Posterior cingulate gyrus (tissue), 11 donors: ENCODE measurements at regions of chr15 and their contacts with region 1.

Region 1: GRCh38 chr15:68924866-68925560 is 5.3 kb upstream of the SPESP1 start:
- DNase-seq: peak; percentile 66 to 97 (median 85)

Region 2: DNA sequence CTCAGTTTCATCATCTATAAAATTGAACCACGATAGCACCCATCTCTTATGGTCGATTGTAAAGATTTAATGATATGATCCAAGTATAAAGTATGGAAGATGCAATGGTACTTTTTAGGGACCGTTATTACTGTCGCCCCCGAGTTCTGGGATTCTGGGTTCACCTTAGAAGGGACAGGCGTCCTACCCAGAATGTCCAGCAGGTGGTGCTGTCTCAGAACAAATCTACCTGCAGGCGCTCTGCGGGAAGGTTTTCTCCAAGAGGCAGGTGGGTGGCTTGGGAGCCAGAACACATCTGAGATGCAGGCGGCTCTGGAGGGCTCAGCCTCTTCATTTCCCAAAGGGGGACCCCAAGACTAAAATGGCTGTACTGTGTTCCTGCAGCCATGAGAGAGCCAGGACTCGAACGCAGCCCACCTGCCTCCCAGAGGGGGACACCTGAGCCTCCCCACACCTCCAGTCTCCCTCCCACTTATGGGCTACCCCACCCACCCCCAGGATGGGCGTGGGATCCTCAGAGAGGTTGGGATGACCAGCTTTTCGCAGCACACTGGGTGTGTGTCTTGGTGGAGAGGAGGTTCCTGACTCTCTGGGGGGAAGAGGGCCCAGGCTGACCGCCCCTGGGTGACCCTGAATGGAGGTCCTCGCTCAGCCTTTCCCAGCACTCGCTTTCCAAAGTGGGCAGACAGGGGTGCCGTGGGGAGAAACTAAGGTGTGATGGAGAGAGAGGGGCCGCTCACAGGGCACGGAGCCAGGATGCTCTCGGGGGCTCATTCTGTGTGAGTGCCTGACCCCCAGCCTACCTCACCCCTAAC is 374.3 kb before region 1 on chr15:
- intact Hi-C with region 1: loop called (anchors 2 kb)
- DNase-seq: peak; percentile 59 to 96 (median 88)

Region 3: DNA sequence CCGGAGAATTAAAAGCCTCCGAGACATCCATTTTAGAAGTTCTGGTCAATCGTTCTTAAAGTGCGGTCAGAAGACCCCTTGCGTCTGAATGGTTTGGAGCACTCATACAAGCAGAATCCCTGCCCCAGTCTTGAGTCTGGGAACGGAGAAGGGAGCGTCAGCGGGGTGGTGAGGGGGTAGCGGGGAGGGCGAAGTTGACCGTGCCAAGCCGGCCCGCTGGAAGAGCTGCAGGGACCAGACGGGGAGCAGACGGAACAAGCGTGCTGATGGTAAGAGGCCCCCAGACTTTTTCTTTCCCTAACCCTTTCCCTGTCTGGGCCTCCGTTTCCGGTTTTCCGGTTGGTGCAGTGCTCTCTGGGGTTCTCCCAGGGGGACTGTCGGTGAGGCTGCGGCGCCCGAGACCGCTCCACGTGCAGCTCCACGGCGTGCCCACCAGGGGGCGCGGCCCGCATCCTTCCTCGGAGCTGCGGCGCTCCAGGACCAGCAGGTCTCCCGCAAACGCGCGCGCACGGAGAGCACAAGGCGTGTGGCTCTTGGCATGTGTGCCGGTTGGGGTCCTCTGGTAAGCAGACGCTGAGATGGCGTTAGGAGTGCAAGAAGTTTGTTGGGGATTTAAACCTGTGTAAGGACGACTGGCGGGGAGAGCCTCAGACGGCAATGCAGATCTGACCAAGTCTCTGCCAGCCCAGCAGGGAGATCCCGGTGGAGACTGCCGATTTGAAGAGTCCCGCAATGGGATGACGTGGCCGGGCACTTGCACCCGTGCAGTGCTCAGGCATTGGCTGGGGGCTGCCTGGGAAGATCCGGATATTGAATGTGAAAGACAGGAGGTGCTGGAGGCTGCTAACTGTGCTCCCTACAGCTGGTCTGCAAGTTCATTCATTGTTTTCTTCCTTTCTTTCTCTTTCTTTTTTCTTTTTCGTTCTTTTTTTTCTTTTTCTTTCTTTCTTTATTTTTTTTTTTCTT is 365.4 kb before region 1 on chr15:
- intact Hi-C with region 1: loop called (anchors 2 kb)
- DNase-seq: peak; percentile 68 to 98 (median 85)